ENCODE measurements at regions of chr3 and their contacts with region 1.

Region 1: GRCh38 chr3:133054571-133054970 is 16.4 kb downstream of the TMEM108 start:
- DNase-seq: no peak

Region 2: GRCh38 chr3:133023362-133023761 is 31.2 kb before region 1 on chr3:
- intact Hi-C with region 1: loop called in 1 of 2 experiments (anchors 1 kb)
- DNase-seq: no peak

Measured in posterior vena cava (tissue), 2 donors.